Activated naive CD4-positive, alpha-beta T cell treated with anti-CD3 and anti-CD28 coated beads for 36 hours (primary cell): ENCODE measurements at regions of chr6 and their contacts with region 1.

Region 1: DNA sequence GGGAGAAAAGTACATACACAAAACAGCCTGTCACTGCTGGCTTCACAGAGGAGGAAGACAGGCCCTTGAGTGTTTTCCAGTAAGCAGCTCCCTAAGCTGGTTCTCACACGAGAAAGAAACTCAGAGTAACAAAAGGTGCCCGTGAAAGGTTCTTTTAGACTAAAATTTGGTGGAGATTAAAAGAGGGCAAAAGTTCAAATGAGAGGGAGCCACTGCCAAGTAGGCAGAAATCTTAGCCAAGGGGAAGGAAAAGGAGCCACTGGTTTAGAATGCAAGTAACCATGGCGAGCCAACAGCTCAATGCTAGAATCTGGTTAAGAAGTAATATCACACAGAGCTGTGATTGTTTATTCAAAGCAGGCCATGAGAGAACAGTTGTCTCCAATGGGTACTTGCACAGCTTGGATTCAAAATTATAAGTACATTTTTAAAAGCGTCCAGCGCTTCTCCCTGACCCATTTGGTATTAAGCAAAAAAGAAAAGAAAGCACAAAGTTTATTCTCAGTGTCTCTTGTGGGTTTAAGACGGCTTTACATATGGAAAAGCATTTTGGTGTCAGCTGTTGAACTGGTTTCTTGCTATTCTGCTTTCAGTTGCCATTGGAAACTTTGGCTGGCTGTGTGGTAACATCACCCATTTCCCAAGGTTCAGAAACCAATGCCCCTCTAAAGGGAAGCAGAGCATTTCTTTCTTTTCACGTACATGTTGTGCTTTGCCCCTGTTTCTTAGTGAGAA is 648.5 kb downstream of the RNF144B start:
- DNase-seq: no peak
- H3K4me3 Mint-ChIP-seq: no peak overlapping the region
- H3K27ac Mint-ChIP-seq: no peak overlapping the region
- H3K4me1 Mint-ChIP-seq: no peaks in the 10 kb centered on the region
- H3K27me3 Mint-ChIP-seq: no peaks in the 10 kb centered on the region

Region 2: GRCh38 chr6:19052219-19052618 is 16.6 kb after region 1 on chr6:
- CTCF ChIA-PET with region 1: interaction called, 3 read pairs
- intact Hi-C with region 1: loop called (anchors 1 kb)
- DNase-seq: no peak
- H3K4me3 Mint-ChIP-seq: no peak overlapping the region
- H3K27ac Mint-ChIP-seq: no peak overlapping the region
- H3K4me1 Mint-ChIP-seq: no peaks in the 10 kb centered on the region
- H3K27me3 Mint-ChIP-seq: no peaks in the 10 kb centered on the region